WTC11 (cell line): ENCODE measurements at regions of chr20 and their contacts with region 1.

Region 1: DNA sequence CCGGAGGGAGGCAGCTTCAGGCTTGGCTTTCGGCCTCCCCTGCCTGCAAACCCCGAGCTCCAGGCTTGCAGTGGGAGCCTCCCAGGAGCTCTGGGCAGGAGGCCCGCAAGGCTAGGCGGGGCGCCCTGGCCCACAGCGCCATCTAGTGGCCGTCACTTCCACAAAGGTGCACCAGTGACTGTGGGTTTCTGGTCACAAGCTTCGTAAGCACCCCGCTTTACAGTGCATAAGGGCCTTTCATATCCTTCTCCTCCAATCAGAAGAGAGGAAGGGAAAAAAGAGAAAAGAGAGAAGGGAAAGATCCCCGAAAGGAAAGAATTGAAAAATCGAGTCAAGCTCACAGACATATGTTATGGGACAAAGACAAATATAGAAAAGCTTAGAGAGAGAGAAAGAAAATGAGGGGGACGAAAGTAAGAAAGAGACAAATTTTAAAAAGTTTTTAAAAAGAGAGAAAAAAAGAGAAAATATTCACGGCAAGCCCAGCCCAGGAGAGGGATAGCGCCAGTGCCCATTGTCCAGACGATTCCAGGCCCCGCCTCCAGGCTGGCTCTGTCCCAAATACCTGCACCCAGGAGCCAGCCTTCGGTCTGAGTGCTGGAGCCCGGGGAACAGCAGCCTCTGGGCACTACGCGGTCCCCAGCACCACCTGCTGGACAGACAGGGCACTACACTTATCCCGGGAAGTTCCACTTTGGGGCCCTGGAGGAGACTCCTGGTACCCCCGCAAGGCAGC is 207.1 kb downstream of the PREX1 start:
- DNase-seq: peak; percentile 97
- ATAC-seq: peak; percentile 90
- H3K4me3 Mint-ChIP-seq: peak overlapping the region; percentile 73
- H3K27ac Mint-ChIP-seq: peak overlapping the region; percentile 50
- H3K4me1 Mint-ChIP-seq: peaks cover 8% of the 10 kb centered on the region; the same call in 1 of the 2 replicates
- H3K27me3 Mint-ChIP-seq: no peaks in the 10 kb centered on the region; the same call in 1 of the 2 replicates
- CTCF ChIP-seq: peak; percentile 84

Region 2: GRCh38 chr20:47663333-47664067 is 957.2 kb before region 1 on chr20:
- CTCF ChIA-PET with region 1: interaction called, 17 read pairs
- POLR2A ChIA-PET with region 1: no interaction called
- DNase-seq: peak; percentile 93
- ATAC-seq: peak; percentile 88
- H3K4me3 Mint-ChIP-seq: no peak overlapping the region
- H3K27ac Mint-ChIP-seq: peak overlapping the region; percentile 41; the same call in 1 of the 2 replicates
- H3K4me1 Mint-ChIP-seq: peaks cover 19% of the 10 kb centered on the region
- H3K27me3 Mint-ChIP-seq: no peaks in the 10 kb centered on the region
- CTCF ChIP-seq: peak; percentile 98

Region 3: DNA sequence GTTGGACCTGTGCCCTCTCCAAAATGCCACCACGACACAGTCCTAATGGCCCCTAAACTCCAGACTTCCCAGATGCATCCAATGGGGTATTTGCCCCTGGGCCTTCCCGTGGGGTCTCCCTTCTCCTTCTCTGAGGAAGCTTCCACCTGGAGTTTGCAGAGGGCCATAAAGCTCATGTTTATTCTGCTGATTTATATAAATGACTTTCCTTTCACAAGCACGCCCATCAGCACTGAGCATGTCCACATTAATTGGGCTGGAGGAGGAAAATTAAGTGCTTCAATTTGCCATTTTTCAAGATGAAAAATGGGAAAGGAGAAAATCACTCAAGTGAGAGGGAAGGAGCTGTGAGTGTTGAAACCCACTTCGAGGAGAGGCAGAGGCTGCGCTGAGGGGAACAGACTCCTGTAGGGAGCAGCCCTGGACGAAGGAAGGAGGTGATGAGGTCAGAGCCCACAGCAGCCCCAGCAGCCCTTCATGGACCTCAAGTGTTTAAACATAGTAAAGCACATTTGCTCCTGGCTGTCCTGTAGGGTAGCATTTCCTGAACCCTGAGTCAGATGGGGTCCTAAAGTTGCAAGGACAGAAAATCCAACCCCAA is 400.6 kb before region 1 on chr20:
- CTCF ChIA-PET with region 1: interaction called, 11 read pairs
- POLR2A ChIA-PET with region 1: no interaction called
- DNase-seq: no peak
- ATAC-seq: no peak
- H3K4me3 Mint-ChIP-seq: no peak overlapping the region
- H3K27ac Mint-ChIP-seq: no peak overlapping the region
- H3K4me1 Mint-ChIP-seq: peaks cover 4% of the 10 kb centered on the region; the same call in 1 of the 2 replicates
- H3K27me3 Mint-ChIP-seq: no peaks in the 10 kb centered on the region
- CTCF ChIP-seq: no peak

Region 4: GRCh38 chr20:48383846-48384673 is 236.6 kb before region 1 on chr20:
- CTCF ChIA-PET with region 1: interaction called, 15 read pairs
- POLR2A ChIA-PET with region 1: no interaction called
- DNase-seq: peak; percentile 87
- ATAC-seq: peak; percentile 92
- H3K4me3 Mint-ChIP-seq: peak overlapping the region; percentile 57
- H3K27ac Mint-ChIP-seq: no peak overlapping the region
- H3K4me1 Mint-ChIP-seq: peaks cover 25% of the 10 kb centered on the region
- H3K27me3 Mint-ChIP-seq: no peaks in the 10 kb centered on the region
- CTCF ChIP-seq: no peak

Region 5: GRCh38 chr20:48521026-48521879 is 99.4 kb before region 1 on chr20:
- CTCF ChIA-PET with region 1: interaction called, 13 read pairs
- POLR2A ChIA-PET with region 1: no interaction called
- DNase-seq: no peak
- ATAC-seq: no peak
- H3K4me3 Mint-ChIP-seq: no peak overlapping the region
- H3K27ac Mint-ChIP-seq: no peak overlapping the region
- H3K4me1 Mint-ChIP-seq: peaks cover 2% of the 10 kb centered on the region
- H3K27me3 Mint-ChIP-seq: peaks cover under 1% of the 10 kb centered on the region; the same call in 1 of the 2 replicates
- CTCF ChIP-seq: no peak

Region 6: GRCh38 chr20:48563211-48563870 is 57.3 kb before region 1 on chr20:
- CTCF ChIA-PET with region 1: interaction called, 18 read pairs
- POLR2A ChIA-PET with region 1: no interaction called
- DNase-seq: no peak
- ATAC-seq: no peak
- H3K4me3 Mint-ChIP-seq: no peak overlapping the region
- H3K27ac Mint-ChIP-seq: no peak overlapping the region
- H3K4me1 Mint-ChIP-seq: peaks cover 8% of the 10 kb centered on the region
- H3K27me3 Mint-ChIP-seq: no peaks in the 10 kb centered on the region
- CTCF ChIP-seq: no peak

Region 7: DNA sequence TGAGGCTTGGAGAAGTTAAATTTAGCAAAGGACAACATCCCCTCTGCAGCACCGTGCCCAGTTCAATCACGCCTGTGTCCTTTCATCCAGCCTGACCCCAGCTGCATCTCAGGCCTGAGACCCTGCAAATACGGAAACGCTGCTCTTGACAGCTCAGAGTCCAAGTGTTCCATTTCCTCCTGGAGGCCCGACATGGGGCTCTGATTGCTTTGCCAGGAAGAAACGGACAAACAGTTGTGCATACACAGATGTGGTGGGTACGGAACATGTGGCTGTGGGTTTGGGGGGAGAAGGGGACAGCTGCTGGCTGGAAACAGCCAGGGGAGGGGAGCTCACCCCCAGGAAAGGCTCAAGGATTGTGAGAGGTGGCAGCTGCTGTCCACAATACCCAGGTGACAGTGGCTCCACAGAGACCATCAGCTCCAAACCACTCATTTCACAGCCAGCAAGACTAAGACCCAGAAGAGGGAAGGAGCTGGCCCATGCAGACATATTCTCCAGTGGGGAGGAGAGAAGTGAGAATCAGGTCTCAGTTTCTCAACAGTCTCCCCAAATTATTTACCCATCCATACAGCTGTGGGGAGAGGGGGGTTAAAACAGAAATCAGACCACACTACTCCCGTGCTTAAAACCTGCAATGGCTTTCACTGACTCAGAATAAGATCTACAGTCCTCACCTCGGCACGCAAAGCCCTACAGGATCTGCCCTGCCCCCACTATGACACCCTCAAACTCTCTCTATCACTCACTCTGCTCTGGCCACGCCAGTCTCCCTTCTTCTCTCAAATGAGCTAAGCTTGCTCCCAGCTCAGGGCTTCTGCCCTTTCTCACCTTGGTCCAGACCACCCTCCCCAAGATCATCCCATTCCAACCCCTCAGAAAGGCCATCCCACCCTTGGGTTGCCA is 118.0 kb after region 1 on chr20:
- CTCF ChIA-PET with region 1: no interaction called
- POLR2A ChIA-PET with region 1: no interaction called
- DNase-seq: no peak
- ATAC-seq: no peak
- H3K4me3 Mint-ChIP-seq: no peak overlapping the region
- H3K27ac Mint-ChIP-seq: peak overlapping the region; percentile 58
- H3K4me1 Mint-ChIP-seq: peaks cover 10% of the 10 kb centered on the region
- H3K27me3 Mint-ChIP-seq: no peaks in the 10 kb centered on the region
- CTCF ChIP-seq: no peak